HEK293 (cell line): ENCODE measurements at regions of chr9 and their contacts with region 1.

Region 1: GRCh38 chr9:87336914-87337333 is 160.7 kb upstream of the DAPK1 start:
- H3K4me3 ChIP-seq: peak overlapping the region; percentile 46
- H3K27ac ChIP-seq: no peak overlapping the region
- H3K4me1 ChIP-seq: no peaks in the 10 kb centered on the region; the same call in 1 of the 2 replicates
- CTCF ChIP-seq: peak; percentile 44; the same call in 1 of the 2 replicates

Region 2: DNA sequence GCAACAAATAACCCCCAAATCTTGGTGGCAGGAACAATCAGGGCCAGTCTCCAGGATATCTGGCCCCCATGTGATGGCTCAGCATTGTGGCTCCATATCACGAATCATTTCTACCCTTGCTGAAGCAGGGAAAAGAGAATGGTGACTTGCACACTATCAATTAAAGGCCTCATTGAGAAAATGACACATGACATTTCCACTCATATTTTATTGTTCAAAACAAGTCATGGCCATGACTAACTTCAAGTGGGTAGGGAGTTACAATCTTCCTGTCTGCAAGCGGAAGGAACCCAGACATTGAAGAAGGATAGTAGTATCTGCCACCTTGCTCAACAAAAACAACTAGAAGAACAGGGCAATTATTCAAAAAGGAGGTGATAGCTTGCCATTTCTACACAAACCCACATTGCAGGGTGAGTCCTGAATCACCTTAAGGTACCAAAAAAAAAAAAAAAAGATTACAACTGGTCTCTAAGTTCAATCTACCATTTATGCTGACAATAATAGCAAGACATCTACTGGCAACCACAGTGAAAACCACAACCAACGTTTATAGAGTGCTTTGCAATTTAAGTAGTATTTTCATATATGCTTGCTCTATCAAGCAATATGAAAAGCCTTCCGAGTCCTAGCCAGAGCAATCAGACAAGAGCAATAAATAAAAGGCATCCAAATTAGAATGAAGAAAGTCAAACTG is 25.9 kb before region 1 on chr9:
- CTCF ChIA-PET with region 1: no interaction called
- POLR2A ChIA-PET with region 1: no interaction called
- H3K4me3 ChIP-seq: no peak overlapping the region
- H3K27ac ChIP-seq: no peak overlapping the region
- H3K4me1 ChIP-seq: no peaks in the 10 kb centered on the region
- CTCF ChIP-seq: no peak

Region 3: GRCh38 chr9:87497604-87498045 is 160.7 kb after region 1 on chr9 and contains the start of gene DAPK1:
- CTCF ChIA-PET with region 1: interaction called, 14 read pairs
- POLR2A ChIA-PET with region 1: interaction called, 12 read pairs
- H3K4me3 ChIP-seq: peak within 1 kb of the TSS; percentile 73
- H3K27ac ChIP-seq: peak within 1 kb of the TSS; percentile 87
- H3K4me1 ChIP-seq: peaks cover 9% of the 10 kb centered on the region; the same call in 1 of the 2 replicates
- CTCF ChIP-seq: 0 out of 2 replicates have a peak, but pooled peaks have one; percentile 29

Region 4: DNA sequence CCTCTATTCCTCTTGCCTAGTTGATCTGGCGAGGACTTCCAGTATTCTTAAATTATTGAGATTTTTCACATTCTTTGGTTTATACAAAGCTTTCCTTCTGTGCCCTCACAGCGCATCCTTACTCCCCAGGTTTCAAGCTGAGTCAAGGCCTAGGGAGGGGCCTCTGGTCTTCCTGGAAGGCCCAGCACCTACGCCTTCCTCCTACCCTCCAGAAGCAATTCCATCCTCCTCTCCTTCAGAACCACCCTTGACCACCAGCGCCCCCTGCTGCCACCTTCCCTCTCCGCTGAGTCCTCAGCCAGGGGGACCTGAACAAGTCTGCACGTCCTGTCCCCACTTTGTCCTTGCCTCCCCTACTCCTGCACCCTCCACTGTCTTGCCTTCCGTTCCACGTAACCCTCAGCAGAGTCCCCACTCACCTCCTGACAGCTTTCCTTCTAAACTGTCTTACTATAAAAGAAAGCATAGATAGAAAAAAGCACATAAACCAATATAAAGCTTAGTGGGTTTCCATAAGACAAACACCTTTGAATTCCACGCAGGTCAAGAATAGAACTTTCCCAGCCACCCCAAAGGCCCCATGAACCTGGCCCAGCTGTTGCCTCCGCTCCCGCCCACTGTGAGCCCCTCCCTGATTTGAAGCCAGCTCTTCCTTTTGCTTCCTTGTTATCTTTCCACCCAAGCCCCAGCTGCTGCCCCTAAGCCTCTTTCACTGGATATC is 326.0 kb after region 1 on chr9:
- CTCF ChIA-PET with region 1: interaction called, 38 read pairs
- POLR2A ChIA-PET with region 1: interaction called, 4 read pairs
- H3K4me3 ChIP-seq: no peak overlapping the region
- H3K27ac ChIP-seq: no peak overlapping the region
- H3K4me1 ChIP-seq: no peaks in the 10 kb centered on the region
- CTCF ChIP-seq: peak; percentile 82; the same call in 1 of the 2 replicates